ENCODE measurements at regions of chr12 and their contacts with region 1.

Region 1: GRCh38 chr12:130916251-130916911 is 37.3 kb upstream of the ADGRD1 start:
- DNase-seq: no peak

Region 2: GRCh38 chr12:131132118-131132892 is 215.9 kb after region 1 on chr12:
- intact Hi-C with region 1: loop called (anchors 2 kb)
- DNase-seq: peak; percentile 84

Region 3: DNA sequence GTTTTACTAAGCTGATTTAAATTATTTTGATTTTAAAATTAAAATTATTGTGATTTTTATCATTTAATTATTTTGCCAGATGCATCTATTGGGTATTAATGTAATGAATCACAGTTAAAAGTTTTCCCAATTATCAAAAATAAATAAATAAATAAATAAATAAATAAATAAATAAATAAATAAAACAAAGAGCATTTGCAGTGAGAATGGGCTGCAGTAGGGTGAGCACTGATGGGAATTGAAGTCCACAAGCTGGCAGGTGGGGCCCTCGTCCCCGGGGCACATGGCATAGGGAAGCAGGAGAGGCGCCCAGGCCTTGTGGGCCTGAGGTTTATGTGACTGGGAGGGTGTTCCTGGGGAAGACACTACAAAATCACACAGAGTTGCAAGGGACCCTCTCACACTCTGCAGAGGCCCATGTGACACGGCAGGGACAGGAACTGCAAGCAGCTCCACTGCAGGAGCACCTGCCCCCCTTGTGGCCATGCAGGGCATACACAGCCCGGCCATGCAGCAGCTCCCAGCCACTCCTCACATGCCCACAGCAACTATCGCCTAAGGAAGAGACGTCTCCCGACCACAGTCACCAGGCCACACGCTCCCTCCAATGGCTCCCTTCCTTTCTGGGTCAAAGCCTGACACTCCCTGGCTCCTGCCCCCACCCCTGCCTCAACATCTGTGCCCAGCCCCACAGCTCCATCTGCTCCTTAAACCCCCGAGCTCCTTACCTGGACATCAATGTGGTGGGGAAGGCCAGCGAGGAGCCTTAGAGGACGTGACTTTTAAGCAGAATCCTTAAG is 538.2 kb after region 1 on chr12:
- intact Hi-C with region 1: loop called (anchors 10 kb)
- DNase-seq: no peak

Region 4: DNA sequence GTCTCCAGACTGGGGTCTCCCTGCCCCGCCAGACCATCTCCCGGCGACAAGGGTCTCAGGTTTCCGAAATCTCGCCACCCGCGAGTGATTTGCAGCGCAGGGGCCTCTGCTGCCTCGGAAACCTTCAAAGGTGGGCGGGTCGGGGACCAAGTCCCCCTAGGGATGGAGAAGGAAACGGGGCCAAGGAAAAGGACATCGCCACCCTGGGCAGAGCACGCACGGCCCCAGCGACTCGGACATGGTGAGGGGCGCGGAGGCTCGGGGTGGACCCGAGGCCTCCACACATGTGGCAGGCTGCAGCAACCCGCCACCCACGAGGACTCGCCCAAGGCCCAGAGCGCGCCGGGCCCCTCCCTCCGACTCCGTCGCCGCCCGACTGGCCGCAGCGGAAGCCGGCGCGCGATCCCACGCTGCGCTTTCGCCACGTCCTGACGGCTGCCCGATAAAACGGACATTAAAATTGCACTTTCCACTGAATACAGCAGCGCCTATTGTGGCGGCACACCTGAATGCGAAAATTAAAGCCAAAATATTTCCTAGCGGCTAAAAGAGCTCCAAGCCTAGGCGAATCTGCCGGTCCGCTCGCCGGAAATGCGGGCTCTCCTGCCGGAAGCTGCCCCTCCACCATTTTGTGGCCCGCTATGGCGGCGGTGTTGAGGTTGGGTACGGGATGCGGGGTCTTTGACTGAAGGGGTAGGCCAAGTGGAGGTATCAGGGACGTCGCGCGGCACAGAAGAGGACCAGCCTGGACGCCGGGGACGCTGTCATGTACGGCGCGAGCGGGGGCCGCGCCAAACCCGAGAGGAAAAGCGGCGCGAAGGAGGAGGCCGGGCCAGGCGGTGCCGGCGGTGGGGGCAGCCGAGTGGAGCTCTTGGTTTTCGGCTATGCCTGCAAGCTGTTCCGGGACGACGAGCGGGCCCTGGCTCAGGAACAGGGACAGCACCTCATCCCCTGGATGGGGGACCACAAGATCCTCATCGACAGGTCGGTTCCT is 794.4 kb after region 1 on chr12 and contains the start of gene SFSWAP:
- intact Hi-C with region 1: loop called (anchors 10 kb)
- DNase-seq: peak; percentile 91
- total RNA-seq, gene SFSWAP: 20.9 TPM